ENCODE measurements at regions of chr3 and their contacts with region 1.

Region 1: DNA sequence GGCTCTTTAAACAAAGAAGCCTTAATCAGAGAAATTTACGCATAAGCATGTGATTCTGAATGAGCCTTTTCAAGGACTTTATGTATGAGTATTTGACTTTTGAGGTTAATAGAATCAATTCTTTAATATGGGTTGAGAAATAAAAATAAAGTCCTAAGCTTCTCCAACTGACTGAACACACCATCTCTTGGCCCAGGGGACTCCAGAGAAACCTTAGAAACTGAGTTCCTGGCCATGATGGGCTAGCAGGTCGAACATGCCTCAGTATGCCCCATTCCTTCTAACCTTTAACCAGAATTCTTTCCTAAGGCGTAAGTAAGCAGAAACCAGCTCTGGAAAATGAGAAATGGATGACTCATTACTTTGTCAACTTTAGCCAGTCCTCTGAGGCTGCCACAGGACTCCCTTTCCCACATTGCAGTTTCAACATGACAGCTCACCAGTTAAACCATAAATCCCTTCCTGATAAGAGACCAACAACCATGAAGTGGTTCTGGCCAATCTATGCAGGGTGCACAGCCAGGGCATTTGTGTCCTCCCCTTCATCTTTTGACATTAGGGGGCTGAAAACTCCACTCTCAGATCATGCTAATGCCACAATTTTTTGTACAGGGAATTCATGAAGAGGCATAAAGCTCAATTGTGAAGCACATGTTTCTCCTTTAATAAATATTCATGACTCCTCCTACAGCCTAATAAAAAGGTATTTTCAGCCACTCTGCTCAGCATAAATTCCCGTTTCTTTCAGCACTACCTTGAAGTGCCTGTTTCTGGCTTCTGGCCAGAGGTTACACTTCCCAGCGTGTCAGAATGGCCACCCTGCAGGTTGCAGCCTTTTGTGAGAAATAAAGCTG is 33.3 kb downstream of the TM4SF18 start:
- DNase-seq: peak; percentile 99
- H3K4me3 ChIP-seq: no peak overlapping the region
- H3K27ac ChIP-seq: peak overlapping the region; percentile 95
- H3K4me1 ChIP-seq: peaks cover 40% of the 10 kb centered on the region
- H3K27me3 ChIP-seq: no peaks in the 10 kb centered on the region
- CTCF ChIP-seq: no peak

Region 2: DNA sequence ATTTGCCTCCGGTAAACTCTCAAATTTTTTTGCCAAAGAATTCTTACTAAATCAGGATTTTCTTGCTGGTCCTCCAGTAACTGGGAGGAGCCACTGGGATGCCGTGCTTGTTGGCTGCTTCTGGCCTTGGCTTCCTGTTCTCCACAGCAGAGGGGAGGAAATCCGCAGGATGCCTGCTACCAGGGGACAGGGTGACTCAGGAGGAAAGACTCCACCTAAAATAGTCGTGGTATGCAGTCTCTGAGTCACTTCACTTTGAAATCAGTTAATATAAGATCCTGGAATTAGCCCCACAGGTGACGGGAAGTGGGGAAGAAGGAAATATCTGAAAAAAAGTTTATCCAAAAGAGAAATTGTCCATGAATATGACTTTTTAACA is 39.8 kb after region 1 on chr3:
- CTCF ChIA-PET with region 1: no interaction called
- dilution Hi-C with region 1: no loop called
- in situ Hi-C with region 1: no loop called
- intact Hi-C with region 1: loop called (anchors 2 kb)
- DNase-seq: peak; percentile 88
- H3K4me3 ChIP-seq: peak overlapping the region in 1 of 3 experiments; percentile 6
- H3K27ac ChIP-seq: peak overlapping the region; percentile 77
- H3K4me1 ChIP-seq: peaks cover 43% of the 10 kb centered on the region
- H3K27me3 ChIP-seq: no peaks in the 10 kb centered on the region
- CTCF ChIP-seq: no peak

Region 3: GRCh38 chr3:149384911-149385321 is 84.8 kb after region 1 on chr3:
- CTCF ChIA-PET with region 1: no interaction called
- dilution Hi-C with region 1: no loop called
- in situ Hi-C with region 1: no loop called
- intact Hi-C with region 1: loop called (anchors 5 kb)
- DNase-seq: peak; percentile 88
- H3K4me3 ChIP-seq: no peak overlapping the region
- H3K27ac ChIP-seq: peak overlapping the region; percentile 99
- H3K4me1 ChIP-seq: peaks cover 41% of the 10 kb centered on the region
- H3K27me3 ChIP-seq: no peaks in the 10 kb centered on the region
- CTCF ChIP-seq: no peak

Measured in mammary epithelial cell (primary cell).